ENCODE measurements at regions of chr1 and their contacts with region 1.

Region 1: GRCh38 chr1:6996371-6996770 is 211.1 kb downstream of the CAMTA1 start:
- DNase-seq: peak; percentile 30
- H3K4me3 Mint-ChIP-seq: no peak overlapping the region
- H3K27ac Mint-ChIP-seq: no peak overlapping the region
- H3K4me1 Mint-ChIP-seq: peaks cover 15% of the 10 kb centered on the region
- H3K27me3 Mint-ChIP-seq: peaks cover 20% of the 10 kb centered on the region

Region 2: DNA sequence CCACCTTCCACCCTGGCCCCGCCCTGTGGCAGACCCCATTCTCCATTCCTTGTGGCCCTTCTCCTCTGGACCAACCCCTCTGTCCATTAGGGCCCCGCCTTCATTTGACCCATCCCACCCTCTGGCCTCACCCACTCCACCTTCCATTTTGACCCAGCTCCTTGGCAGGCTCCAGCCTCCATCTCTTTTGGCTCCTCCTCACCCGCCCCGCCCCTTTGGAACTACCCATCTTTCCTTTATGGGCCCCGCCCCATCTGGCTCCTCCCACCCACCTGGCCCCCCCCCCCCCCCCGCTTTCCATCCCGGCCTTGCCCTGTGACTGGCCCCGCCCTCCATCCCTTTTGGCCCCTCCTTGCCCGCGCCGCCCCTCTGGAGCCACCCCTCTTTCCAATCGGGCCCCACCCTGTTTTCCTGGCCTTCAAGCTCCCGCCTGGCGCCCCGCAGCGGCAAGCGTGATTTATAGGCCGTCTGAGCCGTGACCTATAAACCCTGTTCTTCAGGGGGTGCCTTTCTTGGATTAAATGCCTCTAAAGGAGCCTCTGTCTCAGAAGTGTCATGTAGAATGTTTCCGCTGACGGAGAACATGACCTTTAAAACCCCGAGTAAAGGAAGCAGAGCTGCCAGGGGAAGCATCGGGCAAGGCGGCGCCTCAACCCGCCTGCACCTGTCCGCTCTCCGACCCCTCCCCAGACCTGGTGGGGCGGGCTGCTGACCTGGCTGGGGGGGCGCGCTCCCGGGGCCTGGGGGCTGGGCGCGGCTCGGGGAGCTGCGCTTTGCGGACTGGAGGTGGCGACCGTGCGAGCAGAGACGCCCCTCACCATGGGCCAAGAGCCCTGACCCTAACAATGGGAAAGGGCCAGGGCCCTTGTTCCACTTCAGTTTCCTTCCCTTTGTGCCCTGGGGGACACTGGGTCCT is 33.1 kb before region 1 on chr1:
- CTCF ChIA-PET with region 1: interaction called, 3 read pairs
- intact Hi-C with region 1: loop called (anchors 2 kb)
- DNase-seq: peak; percentile 91
- H3K4me3 Mint-ChIP-seq: peak overlapping the region; percentile 74
- H3K27ac Mint-ChIP-seq: peak overlapping the region; percentile 80
- H3K4me1 Mint-ChIP-seq: peaks cover 22% of the 10 kb centered on the region
- H3K27me3 Mint-ChIP-seq: peaks cover 16% of the 10 kb centered on the region

Measured in activated naive CD4-positive, alpha-beta T cell treated with anti-CD3 and anti-CD28 coated beads for 36 hours (primary cell).